HEK293T (cell line): ENCODE measurements at regions of chr18 and their contacts with region 1.

Region 1: GRCh38 chr18:25853691-25854433 is 236.6 kb downstream of the SS18 start:
- DNase-seq: no peak

Region 2: GRCh38 chr18:25795213-25795612 is 58.6 kb before region 1 on chr18:
- CTCF ChIA-PET with region 1: interaction called, 10 read pairs
- POLR2A ChIA-PET with region 1: no interaction called
- DNase-seq: no peak